KBM-7 (cell line): ENCODE measurements at regions of chr4 and their contacts with region 1.

Region 1: DNA sequence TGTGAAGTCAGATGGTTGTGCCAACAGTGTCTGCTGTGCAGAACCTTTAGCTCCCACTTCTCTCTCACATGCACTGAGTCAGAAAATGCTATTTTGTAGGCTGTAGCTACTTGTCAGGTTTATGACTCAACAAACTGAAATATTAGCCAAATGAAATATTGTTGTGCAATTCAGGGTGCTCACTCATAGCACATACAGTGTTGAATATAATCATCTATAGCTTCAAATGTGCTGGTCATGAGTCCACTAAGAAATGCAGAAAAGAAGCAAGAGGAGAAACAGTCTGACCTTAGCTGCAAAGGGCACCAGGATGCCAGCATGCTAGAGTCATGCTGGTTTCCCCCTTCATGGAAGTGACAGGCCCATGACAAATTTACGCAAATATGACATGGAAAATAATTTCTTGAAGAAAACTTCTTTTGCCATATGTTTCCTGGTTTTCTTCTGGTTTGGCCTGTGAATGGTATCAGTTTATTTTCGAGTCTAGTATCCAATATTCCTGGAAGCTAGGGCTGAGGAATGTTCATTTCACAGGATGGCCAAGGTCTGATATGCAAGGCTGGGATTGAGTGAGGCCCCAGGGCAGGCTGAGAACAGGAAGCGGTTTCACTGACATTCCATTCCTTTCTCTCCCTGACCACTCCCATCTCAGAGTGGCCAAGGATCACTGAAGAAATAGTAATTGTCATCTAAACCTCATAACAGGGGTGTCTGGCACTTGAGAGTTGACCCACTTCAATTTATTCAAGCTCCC is 10.3 kb upstream of the CXCL2 start:
- DNase-seq: no peak

Region 2: GRCh38 chr4:73653695-73654106 is 455.6 kb before region 1 on chr4:
- in situ Hi-C with region 1: loop called (anchors 25 kb)
- DNase-seq: peak; percentile 85